ENCODE measurements at regions of chr17 and their contacts with region 1.

Region 1: GRCh38 chr17:80414803-80415625 is at the start of gene ENDOV:
- DNase-seq: peak; percentile 51 to 96
- H3K4me3 ChIP-seq: peak within 1 kb of the TSS; percentile 93 to 98
- H3K27ac ChIP-seq: peak within 1 kb of the TSS; percentile 91 to 98
- H3K4me1 ChIP-seq: peaks cover 4 to 17% of the 10 kb centered on the region in 2 donors
- H3K27me3 ChIP-seq: no peaks in the 10 kb centered on the region
- CTCF ChIP-seq: no peak
- total RNA-seq, gene ENDOV: 18.0 TPM

Region 2: DNA sequence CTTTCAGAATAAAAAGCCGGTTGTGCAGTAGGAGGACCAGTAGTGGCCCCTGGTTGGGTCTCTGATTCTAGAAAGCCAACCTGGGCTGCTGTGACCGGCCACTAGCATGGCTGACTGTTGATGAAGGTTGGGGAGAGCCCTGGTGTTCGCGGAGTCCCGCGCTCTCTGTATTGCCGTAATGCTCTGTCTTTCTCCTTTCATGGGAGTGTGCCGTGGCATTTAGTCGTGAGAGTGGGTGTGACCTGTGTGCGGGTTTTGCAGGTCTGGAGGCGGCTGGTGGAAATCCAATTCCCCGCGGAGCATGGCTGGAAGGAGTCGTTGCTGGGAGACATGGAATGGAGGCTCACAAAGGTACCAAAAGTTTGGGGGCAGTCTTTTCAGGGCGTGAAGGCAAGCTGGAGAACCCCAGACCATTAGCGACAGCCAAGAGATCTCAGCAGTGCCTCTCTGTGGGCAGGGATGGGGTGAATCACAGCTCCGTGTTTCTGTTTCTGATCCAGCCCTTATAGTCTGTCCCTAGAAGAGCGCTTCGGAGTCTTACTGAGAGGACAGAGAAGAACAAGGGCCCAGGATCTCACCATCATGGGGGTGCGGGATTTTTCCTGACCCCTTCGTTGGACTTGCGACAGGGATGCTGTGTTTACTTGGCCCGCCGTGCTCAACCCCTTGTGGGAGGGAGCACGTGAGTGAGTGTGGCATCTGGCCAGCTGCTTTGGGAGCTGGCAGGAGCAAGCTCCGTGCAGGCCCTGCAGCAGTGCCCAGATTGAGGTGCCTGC is 97.9 kb before region 1 on chr17:
- intact Hi-C with region 1: no loop called
- DNase-seq: no peak
- H3K4me3 ChIP-seq: no peak overlapping the region
- H3K27ac ChIP-seq: no peak overlapping the region
- H3K4me1 ChIP-seq: no peaks in the 10 kb centered on the region
- H3K27me3 ChIP-seq: no peaks in the 10 kb centered on the region
- CTCF ChIP-seq: no peak

Region 3: DNA sequence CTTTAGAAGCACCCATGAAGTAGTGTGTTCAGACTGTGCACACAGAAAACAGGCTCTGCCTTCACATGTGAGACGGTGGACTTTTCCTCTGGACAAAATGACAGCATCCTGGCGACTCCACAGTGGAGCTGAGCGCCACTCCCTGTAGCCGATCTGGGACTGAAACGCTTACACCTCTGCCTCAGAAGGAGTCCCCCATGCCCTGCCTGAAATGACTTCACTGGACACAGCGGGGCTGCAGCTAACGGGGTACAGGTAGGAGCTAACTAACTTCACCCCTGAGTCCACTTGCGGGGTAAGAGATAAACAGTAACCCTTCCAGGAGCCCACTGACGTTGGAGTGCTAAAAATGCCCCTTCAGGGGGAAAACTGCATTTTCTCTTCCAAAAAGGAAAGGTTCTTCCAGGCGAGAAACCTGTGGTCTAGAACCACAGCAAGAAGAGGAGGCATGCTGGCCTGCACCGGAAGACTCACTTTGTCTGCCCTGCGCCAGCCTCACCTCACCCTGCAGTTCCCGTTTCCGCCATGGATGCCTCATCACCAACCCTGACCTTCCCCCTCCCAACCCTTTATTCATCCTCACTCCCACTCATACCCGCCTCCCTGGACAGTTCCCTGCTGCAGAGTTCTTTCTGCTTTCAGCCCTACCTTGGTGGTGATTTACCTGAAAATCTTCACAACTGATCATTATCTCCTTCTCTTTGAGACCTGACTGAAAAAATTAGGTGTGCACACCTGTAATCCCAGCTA is 19.4 kb before region 1 on chr17:
- intact Hi-C with region 1: no loop called
- DNase-seq: no peak
- H3K4me3 ChIP-seq: no peak overlapping the region
- H3K27ac ChIP-seq: no peak overlapping the region
- H3K4me1 ChIP-seq: no peaks in the 10 kb centered on the region
- H3K27me3 ChIP-seq: no peaks in the 10 kb centered on the region
- CTCF ChIP-seq: no peak

Region 4: DNA sequence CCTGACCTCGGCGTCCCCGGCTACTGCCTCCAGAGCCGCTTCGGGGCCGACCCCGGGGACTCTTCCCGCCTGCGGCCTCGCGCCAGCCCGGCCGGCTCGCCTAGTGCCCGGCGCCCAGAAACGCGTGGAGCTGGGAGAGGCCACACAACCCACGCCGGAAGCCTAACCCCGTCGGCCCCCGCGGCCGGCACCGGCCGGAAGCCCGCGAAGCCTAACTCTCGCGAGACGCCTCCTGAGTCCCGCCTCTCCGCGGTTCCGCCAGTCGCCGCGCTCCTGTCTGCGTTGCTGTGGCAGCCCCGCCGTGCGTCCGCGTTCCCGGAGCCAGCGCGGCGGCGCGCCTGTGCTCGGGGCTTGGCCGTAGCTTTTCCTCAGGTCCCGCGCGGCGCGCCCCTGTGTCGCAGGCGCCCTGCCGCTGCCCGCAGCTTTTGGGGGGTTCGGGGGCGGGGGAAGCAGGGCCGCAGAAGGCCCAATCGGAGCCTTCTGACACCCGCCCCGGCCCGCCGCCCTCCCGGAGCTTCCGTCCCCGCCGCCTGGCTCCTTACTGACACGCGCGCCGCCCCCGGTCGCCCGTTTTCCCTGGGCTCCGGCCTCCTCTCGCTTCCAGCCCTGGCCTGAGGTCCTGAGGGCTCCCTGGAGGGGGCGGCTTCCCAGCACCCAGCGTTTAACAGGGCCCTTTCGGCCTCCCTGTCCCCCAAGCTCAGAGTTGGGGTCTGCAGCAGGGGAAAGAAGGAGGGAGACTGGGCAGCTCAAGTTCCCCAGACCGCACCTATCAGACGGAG is 39.7 kb after region 1 on chr17:
- intact Hi-C with region 1: loop called (anchors 1 kb)
- DNase-seq: peak; percentile 80 to 97
- H3K4me3 ChIP-seq: peak overlapping the region; percentile 71 to 84
- H3K27ac ChIP-seq: peak overlapping the region; percentile 96 to 100
- H3K4me1 ChIP-seq: peaks cover 4 to 17% of the 10 kb centered on the region in 2 donors
- H3K27me3 ChIP-seq: no peaks in the 10 kb centered on the region
- CTCF ChIP-seq: peak in 1 of 3 experiments; percentile 12

Region 5: GRCh38 chr17:80544655-80545498 is 129.9 kb after region 1 on chr17 and contains the start of gene RPTOR:
- intact Hi-C with region 1: loop called (anchors 10 kb)
- DNase-seq: peak; percentile 41 to 92
- H3K4me3 ChIP-seq: peak within 1 kb of the TSS; percentile 74 to 91
- H3K27ac ChIP-seq: peak within 1 kb of the TSS; percentile 65 to 82
- H3K4me1 ChIP-seq: peaks cover 6 to 16% of the 10 kb centered on the region in 2 donors
- H3K27me3 ChIP-seq: no peaks in the 10 kb centered on the region
- CTCF ChIP-seq: no peak
- total RNA-seq, gene RPTOR: 36.1 TPM

Region 6: DNA sequence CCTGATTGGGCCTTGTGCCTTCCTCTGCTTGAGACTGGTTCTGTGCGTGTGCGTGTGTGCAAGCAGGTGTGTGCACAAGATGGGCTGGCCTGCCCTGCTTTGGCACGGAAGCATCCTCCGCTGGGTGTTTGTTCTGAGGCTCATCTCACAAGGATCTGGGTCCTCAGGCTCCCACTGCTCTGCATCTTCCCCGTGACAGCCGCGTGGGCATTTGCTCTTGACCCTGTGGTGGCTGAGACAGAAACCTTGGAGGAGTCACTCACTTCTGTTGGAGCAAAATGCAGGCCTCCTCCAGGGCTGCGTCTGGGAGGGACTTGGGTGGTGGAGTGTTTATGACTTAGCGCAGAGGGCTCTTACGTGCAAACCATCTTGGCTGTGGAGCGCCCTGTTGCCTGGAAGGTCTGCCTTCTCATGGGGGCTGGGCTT is 248.8 kb after region 1 on chr17:
- intact Hi-C with region 1: no loop called
- DNase-seq: no peak
- H3K4me3 ChIP-seq: no peak overlapping the region
- H3K27ac ChIP-seq: no peak overlapping the region
- H3K4me1 ChIP-seq: no peaks in the 10 kb centered on the region
- H3K27me3 ChIP-seq: no peaks in the 10 kb centered on the region
- CTCF ChIP-seq: no peak

Region 7: GRCh38 chr17:80991645-80992076 is 576.6 kb after region 1 on chr17 and contains the start of gene CHMP6:
- intact Hi-C with region 1: loop called (anchors 5 kb)
- DNase-seq: peak in 1 of 2 donors; percentile 84
- H3K4me3 ChIP-seq: peak within 1 kb of the TSS; percentile 90 to 99
- H3K27ac ChIP-seq: peak within 1 kb of the TSS in 1 of 2 donors; percentile 40
- H3K4me1 ChIP-seq: peaks cover 10 to 24% of the 10 kb centered on the region in 2 donors
- H3K27me3 ChIP-seq: no peaks in the 10 kb centered on the region
- CTCF ChIP-seq: peak in 1 of 3 experiments; percentile 69
- total RNA-seq, gene CHMP6: 32.1 TPM

Region 8: GRCh38 chr17:81094509-81095382 is 679.7 kb after region 1 on chr17:
- intact Hi-C with region 1: loop called (anchors 10 kb)
- DNase-seq: peak; percentile 77 to 89
- H3K4me3 ChIP-seq: peak overlapping the region in 1 of 2 donors; percentile 33
- H3K27ac ChIP-seq: peak overlapping the region; percentile 12 to 37
- H3K4me1 ChIP-seq: peaks cover 14 to 18% of the 10 kb centered on the region in 2 donors
- H3K27me3 ChIP-seq: no peaks in the 10 kb centered on the region
- CTCF ChIP-seq: no peak

Measured in ascending aorta (tissue), 2 donors.